ENCODE measurements at regions of chr7 and their contacts with region 1.

Region 1: GRCh38 chr7:77536413-77537135 is 521 bp upstream of the PTPN12 start:
- DNase-seq: peak; percentile 99
- ATAC-seq: peak; percentile 95

Region 2: DNA sequence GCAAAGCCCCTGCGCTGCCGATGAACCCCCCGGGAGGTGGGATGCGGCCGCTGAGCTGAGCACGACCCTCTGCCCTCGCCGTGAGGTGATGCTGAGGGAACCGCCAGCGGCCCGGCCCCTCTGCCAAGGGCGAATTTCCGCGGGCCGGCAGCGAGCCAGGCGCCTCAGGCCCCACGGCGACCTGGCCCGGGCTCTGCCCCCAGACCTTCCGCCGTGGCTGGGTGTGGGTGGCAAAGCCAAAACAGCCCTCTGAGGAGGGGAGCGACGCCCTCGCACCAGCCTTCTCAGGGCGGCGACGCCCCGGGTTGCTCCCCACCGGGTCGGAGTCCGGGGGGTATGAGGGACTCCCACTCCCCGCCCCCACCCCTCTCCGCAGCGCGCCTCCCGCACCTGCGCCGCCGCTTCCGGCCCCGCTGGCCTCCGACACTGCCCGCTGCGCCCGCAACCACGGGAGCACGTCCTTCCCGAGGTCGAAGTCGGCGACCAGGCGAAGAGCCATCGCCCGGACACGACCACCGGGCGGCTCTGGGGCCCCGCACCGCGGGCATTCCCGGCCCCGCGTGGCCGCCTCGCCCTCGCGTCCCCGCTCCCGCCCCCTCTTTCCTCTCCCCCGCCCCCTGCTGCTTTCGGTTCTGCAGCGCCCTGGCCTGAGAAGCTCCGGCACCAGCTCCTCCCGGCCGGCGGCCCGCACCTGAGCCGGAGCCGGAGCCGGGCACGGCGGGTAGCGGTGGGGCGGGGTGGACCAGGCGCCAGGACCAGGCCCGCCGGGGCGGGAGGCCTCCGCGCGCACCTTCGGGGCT is 120.6 kb before region 1 on chr7 and contains the start of gene GSAP:
- intact Hi-C with region 1: loop called (anchors 5 kb)
- DNase-seq: peak; percentile 81
- ATAC-seq: peak; percentile 87
- total RNA-seq, gene GSAP: 7.3 TPM

Region 3: GRCh38 chr7:77453531-77453930 is 83.0 kb before region 1 on chr7:
- intact Hi-C with region 1: loop called (anchors 5 kb)
- DNase-seq: no peak
- ATAC-seq: peak; percentile 83

Region 4: GRCh38 chr7:77481615-77482402 is 54.8 kb before region 1 on chr7:
- intact Hi-C with region 1: no loop called
- DNase-seq: no peak
- ATAC-seq: no peak

Region 5: GRCh38 chr7:77570330-77571011 is 33.9 kb after region 1 on chr7:
- intact Hi-C with region 1: loop called (anchors 5 kb)
- DNase-seq: no peak
- ATAC-seq: no peak

Region 6: GRCh38 chr7:77798394-77799077 is 262.0 kb after region 1 on chr7 and contains the starts of genes PHTF2 and TMEM60:
- intact Hi-C with region 1: loop called (anchors 2 kb)
- DNase-seq: peak; percentile 98
- ATAC-seq: peak; percentile 99
- total RNA-seq, gene PHTF2: 21.5 TPM
- total RNA-seq, gene TMEM60: 8.0 TPM

Measured in Right ventricle myocardium inferior (tissue), 1 donor.